Aorta (tissue), 5 donors: ENCODE measurements at regions of chr10 and their contacts with region 1.

Region 1: GRCh38 chr10:114304017-114304570 is 65.0 kb downstream of the VWA2 start:
- DNase-seq: peak; percentile 86 to 87
- ATAC-seq: peak; percentile 85
- H3K4me3 ChIP-seq: peak overlapping the region in 1 of 2 donors; percentile 11
- H3K27ac ChIP-seq: peak overlapping the region in 1 of 2 donors; percentile 28
- H3K4me1 ChIP-seq: no peaks in the 10 kb centered on the region
- H3K27me3 ChIP-seq: no peaks in the 10 kb centered on the region

Region 2: DNA sequence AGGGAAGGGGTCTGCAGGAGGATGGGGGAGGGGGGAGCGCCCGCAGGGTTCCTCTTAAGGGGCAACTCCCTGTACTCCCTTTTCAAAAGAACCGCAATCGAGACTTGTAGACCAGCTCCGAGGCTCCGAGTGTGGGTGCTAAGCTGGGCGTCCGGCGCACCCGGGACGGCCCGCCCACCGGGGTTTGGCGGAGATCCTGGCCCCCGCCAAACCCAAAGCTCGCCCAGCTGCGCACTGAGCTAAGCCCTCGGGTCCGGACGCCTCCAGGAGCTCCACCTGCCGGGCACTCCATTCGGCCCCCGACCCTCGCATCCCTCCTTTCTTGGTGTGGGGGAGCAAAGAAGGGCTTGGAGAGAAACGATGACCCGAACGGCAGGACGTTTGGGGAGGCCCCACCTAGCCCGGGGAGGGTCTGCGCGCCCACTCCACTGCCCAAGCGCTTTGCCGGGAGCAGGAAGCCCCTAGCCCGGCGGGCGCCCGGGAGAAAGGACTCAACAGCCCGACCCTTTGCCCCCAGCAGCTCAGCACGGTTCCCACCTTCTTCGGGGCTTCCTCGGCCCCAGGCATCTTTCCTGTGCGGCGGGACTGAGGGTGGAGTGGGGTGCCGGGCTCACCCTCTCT is 99.6 kb after region 1 on chr10:
- intact Hi-C with region 1: loop called (anchors 1 to 5 kb)
- DNase-seq: peak; percentile 62 to 83
- ATAC-seq: peak; percentile 66
- H3K4me3 ChIP-seq: peak overlapping the region; percentile 57 to 75
- H3K27ac ChIP-seq: no peak overlapping the region
- H3K4me1 ChIP-seq: no peaks in the 10 kb centered on the region
- H3K27me3 ChIP-seq: no peaks in the 10 kb centered on the region

Region 3: GRCh38 chr10:114437456-114438292 is 133.6 kb after region 1 on chr10:
- intact Hi-C with region 1: loop called (anchors 2 to 5 kb)
- DNase-seq: no peak
- ATAC-seq: no peak
- H3K4me3 ChIP-seq: no peak overlapping the region
- H3K27ac ChIP-seq: no peak overlapping the region
- H3K4me1 ChIP-seq: no peaks in the 10 kb centered on the region
- H3K27me3 ChIP-seq: no peaks in the 10 kb centered on the region

Region 4: DNA sequence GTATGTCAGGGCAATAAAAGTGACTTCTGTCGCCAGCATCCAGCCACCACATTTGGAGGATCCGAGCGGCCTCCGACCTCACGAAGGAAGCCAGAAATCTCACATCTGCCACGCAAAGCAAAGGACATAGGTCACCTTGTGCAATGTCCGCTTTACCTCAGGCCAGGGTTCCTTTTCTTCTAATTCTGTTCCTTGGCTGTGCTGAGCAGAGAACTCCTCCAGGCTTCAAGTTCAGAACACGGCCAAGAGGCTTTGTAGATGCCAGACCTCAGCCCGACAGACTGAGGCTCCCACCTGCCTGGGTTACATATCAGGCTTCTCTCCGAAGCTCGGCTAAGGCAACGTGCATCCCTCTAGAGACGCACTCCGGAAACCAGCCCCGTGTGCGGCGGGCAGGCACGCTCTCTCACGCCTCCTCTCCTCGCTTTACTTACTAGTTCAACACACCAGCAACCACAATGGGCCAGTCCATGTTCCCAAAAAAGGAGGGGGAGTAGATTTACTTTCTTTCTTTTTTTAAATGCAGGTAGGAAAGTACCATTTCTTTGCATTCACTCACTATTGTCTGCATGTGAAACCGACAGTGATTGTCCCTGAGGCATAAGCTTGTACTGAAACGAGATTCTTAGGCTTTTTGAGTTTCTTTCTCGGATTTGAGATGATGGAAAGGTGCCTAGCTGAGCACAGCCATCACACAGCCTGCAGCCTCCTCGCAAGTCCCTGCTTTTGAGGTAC is 222.6 kb after region 1 on chr10:
- intact Hi-C with region 1: loop called in 1 of 2 experiments (anchors 10 kb)
- DNase-seq: peak; percentile 77 to 90
- ATAC-seq: peak; percentile 94
- H3K4me3 ChIP-seq: peak overlapping the region; percentile 5 to 17
- H3K27ac ChIP-seq: peak overlapping the region in 1 of 2 donors; percentile 35
- H3K4me1 ChIP-seq: peaks cover 2 to 4% of the 10 kb centered on the region in 2 donors
- H3K27me3 ChIP-seq: no peaks in the 10 kb centered on the region